Dorsolateral prefrontal cortex (tissue), 120 donors: ENCODE measurements at regions of chr2 and their contacts with region 1.

Region 1: DNA sequence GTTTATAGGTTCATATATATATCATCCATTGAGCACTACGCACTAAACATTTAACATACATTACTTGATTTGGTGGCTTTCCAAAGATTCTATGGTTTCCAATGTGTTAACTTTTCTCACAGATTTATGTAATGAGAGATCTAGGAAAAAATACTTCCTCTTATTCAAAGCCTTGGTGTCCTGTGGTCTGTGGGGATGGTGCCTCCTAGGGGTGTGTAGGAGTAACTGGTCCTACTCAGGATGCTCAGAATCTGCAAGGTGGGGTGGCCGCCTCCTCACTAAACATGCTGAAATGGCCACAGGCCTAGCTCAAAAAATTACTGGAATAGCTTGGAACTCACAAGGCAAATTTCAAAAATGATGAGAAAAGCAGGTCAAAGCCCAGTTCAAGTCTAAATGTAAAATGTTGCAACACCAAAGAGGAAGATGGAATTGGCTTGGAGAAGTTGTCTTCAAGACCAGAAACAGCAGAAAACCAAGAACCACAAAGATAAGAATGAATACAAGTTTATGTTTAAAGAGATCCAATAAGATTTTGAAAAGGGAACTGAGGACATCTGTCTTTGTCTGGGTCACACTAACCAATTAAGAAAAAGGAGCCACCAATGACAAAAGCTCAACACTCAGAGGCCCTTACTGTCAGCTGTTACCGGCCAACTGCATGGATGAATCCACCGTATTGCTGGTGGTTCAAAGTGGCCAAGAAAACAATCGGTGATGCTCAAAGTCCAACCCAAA is 11.5 kb downstream of the GPR55 start:
- DNase-seq: peak in 8 of 10 donors; percentile 20 to 59 (median 42)
- H3K4me3 ChIP-seq: no peak overlapping the region
- H3K27ac ChIP-seq: no peak overlapping the region
- H3K27me3 ChIP-seq: no peaks in the 10 kb centered on the region
- CTCF ChIP-seq: peak; percentile 26 to 75 (median 58)

Region 2: GRCh38 chr2:230847883-230848388 is 65.6 kb before region 1 on chr2:
- intact Hi-C with region 1: loop called in 1 of 2 experiments (anchors 5 kb)
- DNase-seq: peak; percentile 57 to 91 (median 88)
- H3K4me3 ChIP-seq: peak overlapping the region in 30 of 59 donors; percentile 4 to 46 (median 30)
- H3K27ac ChIP-seq: peak overlapping the region in 11 of 59 donors; percentile 21 to 67 (median 30)
- H3K27me3 ChIP-seq: no peaks in the 10 kb centered on the region
- CTCF ChIP-seq: peak; percentile 72 to 98 (median 92)

Region 3: GRCh38 chr2:230864598-230865306 is 48.8 kb before region 1 on chr2 and contains the start of gene ITM2C:
- intact Hi-C with region 1: loop called in 1 of 2 experiments (anchors 5 kb)
- DNase-seq: peak in 5 of 10 donors; percentile 60 to 82 (median 72)
- H3K4me3 ChIP-seq: peak within 1 kb of the TSS; percentile 46 to 98 (median 86)
- H3K27ac ChIP-seq: peak within 1 kb of the TSS; percentile 15 to 97 (median 86)
- H3K27me3 ChIP-seq: no peaks in the 10 kb centered on the region
- CTCF ChIP-seq: peak in 46 of 56 donors; percentile 10 to 77 (median 46)
- total RNA-seq, gene ITM2C: 391 to 1,107 (median 596) TPM

Region 4: DNA sequence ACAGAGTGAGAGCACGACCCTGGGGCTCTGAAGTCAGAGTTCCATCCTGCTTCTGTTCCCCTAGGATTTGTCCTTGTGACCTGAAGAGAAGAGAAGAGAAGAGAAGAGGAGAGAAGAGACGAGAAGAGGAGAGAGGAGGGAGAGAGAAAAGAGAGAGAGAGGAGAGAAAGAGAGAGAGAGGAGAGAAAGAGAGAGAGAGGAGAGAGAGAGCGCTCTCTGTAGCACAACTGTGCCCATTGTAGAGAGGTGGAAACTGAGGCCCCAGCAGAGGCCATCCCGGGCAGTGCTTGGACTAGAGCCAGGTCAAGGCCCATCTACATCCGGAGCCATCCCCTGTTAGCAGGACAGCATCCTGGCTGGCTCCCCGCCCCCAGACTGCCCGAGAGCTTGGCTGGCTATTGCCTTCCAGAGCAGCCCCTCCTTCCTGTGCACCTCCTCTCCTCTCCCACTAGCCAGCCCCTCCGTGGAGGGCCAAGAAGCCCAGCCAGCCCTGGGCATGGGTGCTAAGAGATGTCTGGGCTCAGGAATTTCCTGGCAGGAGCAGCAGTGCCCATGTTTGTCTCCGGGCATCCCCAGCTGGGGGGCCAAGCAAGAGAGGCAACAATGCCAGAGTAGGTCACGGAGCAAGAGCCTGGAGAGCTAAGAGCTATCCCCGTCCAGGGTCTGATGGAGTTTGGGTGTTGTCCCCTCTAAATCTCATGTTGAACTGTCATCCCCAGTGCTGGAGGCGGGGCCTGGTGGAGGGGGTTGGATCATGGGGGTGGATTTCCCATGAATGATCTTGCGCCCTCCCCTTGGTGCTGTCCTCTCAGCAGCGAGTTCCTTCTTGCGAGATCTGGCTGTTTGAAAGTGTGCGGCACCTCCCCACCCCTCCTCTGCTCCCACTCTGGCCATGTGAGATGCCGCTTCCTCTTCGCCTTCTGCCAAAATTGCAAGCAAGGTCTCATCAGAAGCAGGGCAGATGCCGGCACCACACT is 29.6 kb after region 1 on chr2:
- intact Hi-C with region 1: no loop called
- DNase-seq: no peak
- H3K4me3 ChIP-seq: no peak overlapping the region
- H3K27ac ChIP-seq: no peak overlapping the region
- H3K27me3 ChIP-seq: no peaks in the 10 kb centered on the region
- CTCF ChIP-seq: no peak